ENCODE measurements at regions of chr11 and their contacts with region 1.

Region 1: GRCh38 chr11:123580557-123581275 is 73.7 kb downstream of the SCN3B start:
- DNase-seq: peak; percentile 80
- H3K4me3 Mint-ChIP-seq: no peak overlapping the region
- H3K27ac Mint-ChIP-seq: peak overlapping the region; percentile 24
- H3K4me1 Mint-ChIP-seq: peaks cover 18% of the 10 kb centered on the region
- H3K27me3 Mint-ChIP-seq: no peaks in the 10 kb centered on the region

Region 2: DNA sequence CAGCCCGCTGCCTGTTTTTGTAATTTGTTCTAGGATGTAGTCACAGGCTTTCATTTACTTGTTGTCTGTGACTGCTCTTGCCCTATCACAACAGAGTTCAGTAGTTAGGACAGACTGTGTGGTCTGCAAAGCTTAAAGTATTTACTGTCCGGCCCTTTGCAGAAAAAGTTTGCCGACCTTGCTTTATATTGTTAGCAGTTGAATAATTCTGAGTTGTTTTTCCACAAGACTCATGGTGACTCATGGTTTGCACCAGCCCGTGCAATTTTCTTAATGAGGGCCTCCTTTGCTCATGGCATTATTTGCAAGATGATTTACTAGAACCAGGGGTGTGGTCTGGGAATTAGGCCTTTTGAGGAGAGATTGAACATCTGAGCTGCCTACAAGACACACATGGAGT is 36.9 kb before region 1 on chr11:
- CTCF ChIA-PET with region 1: no interaction called
- DNase-seq: no peak
- H3K4me3 Mint-ChIP-seq: no peak overlapping the region
- H3K27ac Mint-ChIP-seq: no peak overlapping the region
- H3K4me1 Mint-ChIP-seq: no peaks in the 10 kb centered on the region
- H3K27me3 Mint-ChIP-seq: no peaks in the 10 kb centered on the region

Region 3: DNA sequence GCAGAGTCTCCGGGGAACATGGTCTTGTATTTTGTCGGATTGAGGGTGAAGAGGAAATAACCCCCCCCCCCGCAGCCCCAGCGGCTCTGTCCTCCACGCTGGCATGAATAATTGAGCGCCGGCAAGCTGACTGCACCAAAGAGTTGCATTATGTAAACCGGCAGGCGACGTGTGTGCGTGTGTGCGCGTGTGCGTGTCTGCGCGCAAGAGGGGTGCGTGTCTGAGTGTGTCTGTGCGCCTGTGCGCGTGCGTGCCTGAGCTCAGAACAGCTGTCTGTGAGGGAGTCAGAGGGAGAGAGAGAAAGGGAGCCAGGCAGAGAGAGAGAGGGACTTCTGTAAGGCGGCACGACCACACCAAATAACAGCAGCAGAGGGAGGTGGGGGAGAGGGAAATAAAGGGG is 20.7 kb before region 1 on chr11:
- CTCF ChIA-PET with region 1: interaction called, 15 read pairs
- DNase-seq: peak; percentile 65
- H3K4me3 Mint-ChIP-seq: peak overlapping the region; percentile 45
- H3K27ac Mint-ChIP-seq: peak overlapping the region; percentile 42
- H3K4me1 Mint-ChIP-seq: peaks cover 19% of the 10 kb centered on the region
- H3K27me3 Mint-ChIP-seq: peaks cover 16% of the 10 kb centered on the region

Region 4: GRCh38 chr11:123567466-123567865 is 13.2 kb before region 1 on chr11:
- CTCF ChIA-PET with region 1: interaction called, 27 read pairs
- DNase-seq: no peak
- H3K4me3 Mint-ChIP-seq: no peak overlapping the region
- H3K27ac Mint-ChIP-seq: no peak overlapping the region
- H3K4me1 Mint-ChIP-seq: no peaks in the 10 kb centered on the region
- H3K27me3 Mint-ChIP-seq: no peaks in the 10 kb centered on the region

Region 5: DNA sequence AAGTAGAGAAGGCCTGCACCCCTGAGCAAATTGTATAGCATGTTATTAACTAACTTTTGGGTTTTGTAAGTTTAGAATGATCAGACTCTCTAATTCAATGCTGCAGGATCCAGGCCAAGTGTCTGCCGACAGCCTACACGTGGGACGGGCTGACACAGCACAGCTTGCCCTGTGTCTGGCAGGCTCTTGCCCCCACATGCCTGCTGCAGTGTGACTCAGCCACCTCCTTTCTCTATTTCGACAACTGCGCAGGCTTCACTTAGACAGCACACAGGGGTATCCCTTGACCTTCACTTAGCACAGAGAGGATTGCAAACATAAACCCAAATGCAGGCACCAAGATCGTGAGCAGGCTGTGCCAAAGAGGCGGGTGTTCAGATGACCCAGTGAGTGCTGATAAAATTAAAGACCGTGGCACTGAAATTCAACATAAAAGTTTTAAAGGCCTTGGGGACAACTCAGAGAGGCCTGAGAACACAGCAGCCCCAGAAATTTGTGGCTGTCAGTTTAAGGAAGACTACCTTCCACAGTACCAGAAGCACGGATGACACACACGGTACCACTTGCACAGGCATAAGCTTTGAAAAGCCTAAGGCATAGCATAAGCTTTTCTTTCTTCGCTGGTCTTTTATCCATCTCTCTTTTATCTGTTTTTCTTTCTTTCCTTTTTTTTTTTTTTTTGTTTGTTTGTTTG is 35.9 kb after region 1 on chr11:
- CTCF ChIA-PET with region 1: no interaction called
- DNase-seq: no peak
- H3K4me3 Mint-ChIP-seq: no peak overlapping the region
- H3K27ac Mint-ChIP-seq: no peak overlapping the region
- H3K4me1 Mint-ChIP-seq: no peaks in the 10 kb centered on the region
- H3K27me3 Mint-ChIP-seq: no peaks in the 10 kb centered on the region

Region 6: DNA sequence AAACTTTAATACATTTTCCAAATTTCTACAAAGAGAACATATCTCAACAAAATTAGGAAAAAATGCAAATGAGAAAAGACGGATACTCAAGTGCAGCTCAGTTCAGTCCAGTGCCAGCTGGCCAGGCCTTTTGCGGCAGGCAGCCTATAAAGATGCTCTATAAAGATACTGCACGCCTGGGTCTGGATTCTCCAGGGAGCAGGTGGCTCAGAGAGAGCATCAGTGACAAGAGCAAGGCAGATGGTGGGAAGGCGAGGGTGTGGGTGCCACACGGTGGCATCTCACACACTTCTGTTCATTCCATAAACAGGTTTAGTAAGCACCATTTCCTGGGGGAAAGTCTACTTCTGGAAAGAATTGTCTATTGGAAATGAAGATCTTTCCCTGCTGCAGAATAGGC is 91.9 kb after region 1 on chr11:
- CTCF ChIA-PET with region 1: no interaction called
- DNase-seq: no peak
- H3K4me3 Mint-ChIP-seq: no peak overlapping the region
- H3K27ac Mint-ChIP-seq: no peak overlapping the region
- H3K4me1 Mint-ChIP-seq: no peaks in the 10 kb centered on the region
- H3K27me3 Mint-ChIP-seq: no peaks in the 10 kb centered on the region

Region 7: DNA sequence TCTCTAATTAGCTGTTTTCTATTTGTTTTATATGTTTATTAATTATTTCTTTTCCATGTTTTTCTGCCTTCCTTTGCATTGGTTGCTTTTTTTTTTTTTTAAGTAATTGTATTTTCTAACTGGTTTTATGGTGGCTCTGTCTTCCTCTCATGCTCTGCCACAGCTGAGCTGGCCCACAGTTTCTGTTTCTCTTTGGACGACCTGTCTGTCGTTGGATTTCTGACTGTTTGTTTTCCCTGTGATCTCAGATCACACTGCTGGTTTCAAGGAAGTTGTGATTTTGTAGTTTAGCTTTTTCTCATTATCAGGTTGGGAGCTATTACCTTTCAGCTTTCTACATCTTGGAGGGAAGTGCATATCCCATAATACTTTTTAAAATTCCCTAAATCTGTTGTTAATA is 241.3 kb after region 1 on chr11:
- CTCF ChIA-PET with region 1: no interaction called
- DNase-seq: no peak
- H3K4me3 Mint-ChIP-seq: no peak overlapping the region
- H3K27ac Mint-ChIP-seq: no peak overlapping the region
- H3K4me1 Mint-ChIP-seq: no peaks in the 10 kb centered on the region
- H3K27me3 Mint-ChIP-seq: no peaks in the 10 kb centered on the region

Measured in activated naive CD4-positive, alpha-beta T cell treated with anti-CD3 and anti-CD28 coated beads, Interleukin-2, amount 10 ng/mL, durations not matched to agents 7 days and 5 days (primary cell).